ENCODE measurements at regions of chr3 and their contacts with region 1.

Region 1: DNA sequence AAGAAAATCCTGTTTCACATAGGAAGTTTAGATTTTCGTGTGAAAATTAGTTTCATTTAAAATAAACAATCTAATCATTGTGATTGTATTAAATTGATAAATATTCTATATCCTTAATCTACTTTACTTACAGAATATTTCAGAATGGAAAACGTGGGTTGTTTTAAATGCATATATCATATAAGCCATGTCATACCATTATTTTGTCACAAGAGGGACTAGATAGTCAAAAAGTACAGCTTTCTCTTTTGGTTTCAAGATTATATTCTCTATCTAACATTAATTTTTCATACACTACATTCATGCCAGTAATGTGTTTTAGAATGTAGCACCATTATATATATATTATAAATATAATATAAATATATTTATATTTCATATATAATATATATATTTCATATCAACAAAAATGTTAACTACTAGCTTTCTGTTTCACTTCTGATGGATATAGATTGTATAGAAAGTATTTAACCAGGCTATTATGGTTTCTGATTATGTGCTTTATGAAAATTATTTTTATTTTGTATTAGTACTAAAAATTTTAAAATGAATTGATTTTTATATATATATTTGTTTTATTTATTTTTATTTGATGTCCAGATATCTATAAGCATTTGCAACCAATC is 45.3 kb downstream of the OSTN start:
- DNase-seq: no peak
- ATAC-seq: no peak
- H3K4me3 Mint-ChIP-seq: no peak overlapping the region
- H3K27ac Mint-ChIP-seq: no peak overlapping the region
- H3K4me1 Mint-ChIP-seq: peaks cover 13% of the 10 kb centered on the region
- H3K27me3 Mint-ChIP-seq: peaks cover 1% of the 10 kb centered on the region

Region 2: DNA sequence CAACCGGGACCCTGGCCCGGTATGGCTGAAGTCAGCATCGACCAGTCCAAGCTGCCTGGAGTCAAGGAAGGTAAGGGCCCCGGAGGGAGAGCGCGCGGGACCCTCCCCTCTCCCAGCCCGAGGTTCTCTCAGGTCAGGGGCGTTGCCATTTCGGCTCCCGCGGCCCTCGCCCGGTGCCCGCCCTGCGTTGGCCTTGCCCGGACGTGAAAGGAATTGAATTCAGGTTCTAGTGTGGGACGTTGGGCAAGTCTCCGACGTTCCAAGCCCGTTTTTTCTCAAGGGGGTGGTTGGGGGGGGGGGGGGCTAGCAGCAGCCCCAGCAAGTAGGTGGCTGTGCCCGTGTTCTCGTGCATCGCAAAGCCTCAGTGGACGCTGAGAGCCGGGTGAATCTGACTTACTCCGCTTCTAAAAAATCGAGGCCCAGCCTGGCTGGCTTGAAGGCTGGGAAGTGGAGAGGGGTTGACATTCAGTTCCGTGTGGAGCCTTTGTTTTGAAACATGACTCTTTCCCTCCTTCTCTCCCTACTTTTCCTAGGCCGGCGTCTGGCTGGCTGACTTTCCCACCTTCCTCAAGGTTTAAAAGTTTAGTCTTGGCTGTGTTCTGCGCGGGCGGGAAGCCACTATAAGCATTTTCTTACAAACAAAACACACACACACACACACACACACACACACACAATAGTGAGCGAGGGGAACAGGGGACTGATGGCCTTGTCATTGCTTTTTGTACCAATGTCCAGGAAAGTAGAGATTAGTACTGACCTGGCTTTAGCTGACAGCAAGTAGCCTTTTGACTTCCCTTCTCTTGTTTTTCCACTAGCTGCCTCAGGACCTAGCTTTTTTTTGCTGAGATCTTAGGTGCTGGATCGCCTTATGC is 85.5 kb after region 1 on chr3 and contains the start of gene UTS2B:
- CTCF ChIA-PET with region 1: no interaction called
- POLR2A ChIA-PET with region 1: no interaction called
- intact Hi-C with region 1: loop called (anchors 5 to 10 kb)
- DNase-seq: peak; percentile 43
- ATAC-seq: peak; percentile 25
- H3K4me3 Mint-ChIP-seq: peak within 1 kb of the TSS; percentile 74
- H3K27ac Mint-ChIP-seq: peak within 1 kb of the TSS; percentile 72
- H3K4me1 Mint-ChIP-seq: peaks cover 32% of the 10 kb centered on the region
- H3K27me3 Mint-ChIP-seq: peaks cover 7% of the 10 kb centered on the region
- total RNA-seq, gene UTS2B: not detected

Region 3: GRCh38 chr3:191388823-191389222 is 144.5 kb after region 1 on chr3:
- CTCF ChIA-PET with region 1: no interaction called
- POLR2A ChIA-PET with region 1: no interaction called
- intact Hi-C with region 1: loop called (anchors 1 to 5 kb)
- DNase-seq: no peak
- ATAC-seq: no peak
- H3K4me3 Mint-ChIP-seq: no peak overlapping the region
- H3K27ac Mint-ChIP-seq: no peak overlapping the region
- H3K4me1 Mint-ChIP-seq: no peaks in the 10 kb centered on the region
- H3K27me3 Mint-ChIP-seq: no peaks in the 10 kb centered on the region

Measured in activated CD4-positive, alpha-beta T cell treated with anti-CD3 and anti-CD28 coated beads for 36 hours (primary cell).